ENCODE measurements at regions of chr11 and their contacts with region 1.

Region 1: GRCh38 chr11:66677599-66678375 is at the start of gene RBM4B:
- DNase-seq: peak; percentile 97
- ATAC-seq: peak; percentile 90
- H3K4me3 Mint-ChIP-seq: peak within 1 kb of the TSS; percentile 85
- H3K27ac Mint-ChIP-seq: peak within 1 kb of the TSS; percentile 94
- H3K4me1 Mint-ChIP-seq: peaks cover 27% of the 10 kb centered on the region
- H3K27me3 Mint-ChIP-seq: no peaks in the 10 kb centered on the region
- total RNA-seq, gene RBM4B: 14.7 to 14.8 TPM

Region 2: GRCh38 chr11:66408488-66409214 is 269.1 kb before region 1 on chr11:
- CTCF ChIA-PET with region 1: interaction called, 12 read pairs
- POLR2A ChIA-PET with region 1: no interaction called
- intact Hi-C with region 1: loop called (anchors 1 kb)
- DNase-seq: peak; percentile 97
- ATAC-seq: peak; percentile 86
- H3K4me3 Mint-ChIP-seq: peak overlapping the region; percentile 67
- H3K27ac Mint-ChIP-seq: no peak overlapping the region
- H3K4me1 Mint-ChIP-seq: peaks cover 2% of the 10 kb centered on the region
- H3K27me3 Mint-ChIP-seq: peaks cover 20% of the 10 kb centered on the region

Region 3: GRCh38 chr11:66480117-66480938 is 197.5 kb before region 1 on chr11 and contains the start of gene DPP3:
- CTCF ChIA-PET with region 1: interaction called, 5 read pairs
- POLR2A ChIA-PET with region 1: no interaction called
- intact Hi-C with region 1: loop called in 1 of 2 experiments (anchors 1 kb)
- DNase-seq: peak; percentile 98
- ATAC-seq: peak; percentile 98
- H3K4me3 Mint-ChIP-seq: peak within 1 kb of the TSS; percentile 90
- H3K27ac Mint-ChIP-seq: peak within 1 kb of the TSS; percentile 86
- H3K4me1 Mint-ChIP-seq: peaks cover 22% of the 10 kb centered on the region
- H3K27me3 Mint-ChIP-seq: no peaks in the 10 kb centered on the region
- total RNA-seq, gene DPP3: 87.1 to 91.9 TPM

Region 4: GRCh38 chr11:66568124-66568916 is 109.5 kb before region 1 on chr11 and contains the start of gene CTSF:
- CTCF ChIA-PET with region 1: interaction called, 10 read pairs
- POLR2A ChIA-PET with region 1: interaction called, 4 read pairs
- intact Hi-C with region 1: no loop called
- DNase-seq: peak; percentile 79
- ATAC-seq: peak; percentile 96
- H3K4me3 Mint-ChIP-seq: peak within 1 kb of the TSS; percentile 64
- H3K27ac Mint-ChIP-seq: no peak within 1 kb of the TSS
- H3K4me1 Mint-ChIP-seq: peaks cover 3% of the 10 kb centered on the region
- H3K27me3 Mint-ChIP-seq: no peaks in the 10 kb centered on the region
- total RNA-seq, gene CTSF: 1.3 to 2.0 TPM

Region 5: DNA sequence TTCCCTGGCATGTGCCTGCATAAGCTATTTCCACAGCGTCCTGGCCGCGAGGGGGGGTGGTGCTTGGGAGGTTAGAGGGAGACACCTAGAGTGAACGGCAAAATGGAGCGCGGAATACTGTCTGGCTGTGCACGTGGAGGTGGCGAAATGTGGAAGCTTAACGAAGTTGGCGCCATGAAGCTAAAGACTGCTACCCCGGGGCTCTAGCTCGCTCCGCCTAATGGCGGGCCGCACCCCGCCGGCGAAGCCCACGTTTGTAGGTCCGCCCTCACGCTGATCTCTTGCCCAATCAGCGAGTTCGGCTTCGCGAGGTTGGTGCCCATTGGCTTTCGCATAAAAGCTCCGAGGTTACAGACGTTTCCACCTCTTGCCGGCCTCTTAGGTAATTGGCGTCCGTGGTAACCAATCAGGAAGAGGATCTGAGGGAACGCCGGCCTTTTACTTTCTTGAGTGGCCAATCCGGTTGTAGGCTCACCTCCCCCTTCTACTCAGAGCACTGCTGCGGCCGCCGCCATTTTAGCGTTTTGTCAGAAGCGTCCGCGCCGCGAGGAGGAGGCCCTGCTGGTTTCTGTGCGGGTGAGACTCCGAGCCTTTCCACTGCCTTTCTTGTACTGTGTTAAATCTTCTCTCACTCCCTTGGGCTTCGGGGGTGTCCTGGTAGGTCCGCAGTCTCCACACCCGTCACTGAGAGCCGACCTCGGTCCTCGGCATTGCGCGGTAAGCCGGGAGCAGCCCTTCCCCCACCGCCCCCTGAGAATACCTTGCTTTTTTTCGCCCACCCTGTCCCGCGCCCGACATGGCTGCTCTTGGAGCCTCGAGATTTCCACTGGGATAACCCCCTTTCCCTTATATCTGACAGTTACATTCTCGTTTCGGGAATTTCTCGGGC is 39.4 kb before region 1 on chr11 and contains the start of gene RBM4:
- CTCF ChIA-PET with region 1: interaction called, 19 read pairs
- POLR2A ChIA-PET with region 1: interaction called, 28 read pairs
- intact Hi-C with region 1: loop called (anchors 1 kb)
- DNase-seq: peak; percentile 97
- ATAC-seq: peak; percentile 95
- H3K4me3 Mint-ChIP-seq: peak within 1 kb of the TSS; percentile 89
- H3K27ac Mint-ChIP-seq: peak within 1 kb of the TSS; percentile 97
- H3K4me1 Mint-ChIP-seq: peaks cover 65% of the 10 kb centered on the region
- H3K27me3 Mint-ChIP-seq: no peaks in the 10 kb centered on the region
- total RNA-seq, gene RBM4: 104 to 122 TPM

Region 6: GRCh38 chr11:66842896-66843775 is 165.3 kb after region 1 on chr11 and contains the start of gene RCE1:
- CTCF ChIA-PET with region 1: interaction called, 9 read pairs
- POLR2A ChIA-PET with region 1: no interaction called
- intact Hi-C with region 1: loop called in 1 of 2 experiments (anchors 1 kb)
- DNase-seq: peak; percentile 95
- ATAC-seq: peak; percentile 85
- H3K4me3 Mint-ChIP-seq: peak within 1 kb of the TSS; percentile 92
- H3K27ac Mint-ChIP-seq: peak within 1 kb of the TSS; percentile 92
- H3K4me1 Mint-ChIP-seq: peaks cover 51% of the 10 kb centered on the region
- H3K27me3 Mint-ChIP-seq: no peaks in the 10 kb centered on the region
- total RNA-seq, gene RCE1: 24.9 to 25.6 TPM

Region 7: GRCh38 chr11:67195971-67196456 is 518.2 kb after region 1 on chr11:
- CTCF ChIA-PET with region 1: no interaction called
- POLR2A ChIA-PET with region 1: no interaction called
- intact Hi-C with region 1: no loop called
- DNase-seq: no peak
- ATAC-seq: no peak
- H3K4me3 Mint-ChIP-seq: no peak overlapping the region
- H3K27ac Mint-ChIP-seq: no peak overlapping the region
- H3K4me1 Mint-ChIP-seq: no peaks in the 10 kb centered on the region
- H3K27me3 Mint-ChIP-seq: no peaks in the 10 kb centered on the region

Region 8: GRCh38 chr11:67391304-67392132 is 713.7 kb after region 1 on chr11 and contains the start of gene RAD9A:
- CTCF ChIA-PET with region 1: no interaction called
- POLR2A ChIA-PET with region 1: no interaction called
- intact Hi-C with region 1: loop called in 1 of 2 experiments (anchors 5 kb)
- DNase-seq: peak; percentile 97
- ATAC-seq: peak; percentile 74
- H3K4me3 Mint-ChIP-seq: peak within 1 kb of the TSS; percentile 89
- H3K27ac Mint-ChIP-seq: peak within 1 kb of the TSS; percentile 80
- H3K4me1 Mint-ChIP-seq: peaks cover 34% of the 10 kb centered on the region
- H3K27me3 Mint-ChIP-seq: no peaks in the 10 kb centered on the region
- total RNA-seq, gene RAD9A: 28.8 to 30.0 TPM